Activated CD4-positive, alpha-beta T cell treated with anti-CD3 and anti-CD28 coated beads for 36 hours (primary cell): ENCODE measurements at regions of chr5 and their contacts with region 1.

Region 1: DNA sequence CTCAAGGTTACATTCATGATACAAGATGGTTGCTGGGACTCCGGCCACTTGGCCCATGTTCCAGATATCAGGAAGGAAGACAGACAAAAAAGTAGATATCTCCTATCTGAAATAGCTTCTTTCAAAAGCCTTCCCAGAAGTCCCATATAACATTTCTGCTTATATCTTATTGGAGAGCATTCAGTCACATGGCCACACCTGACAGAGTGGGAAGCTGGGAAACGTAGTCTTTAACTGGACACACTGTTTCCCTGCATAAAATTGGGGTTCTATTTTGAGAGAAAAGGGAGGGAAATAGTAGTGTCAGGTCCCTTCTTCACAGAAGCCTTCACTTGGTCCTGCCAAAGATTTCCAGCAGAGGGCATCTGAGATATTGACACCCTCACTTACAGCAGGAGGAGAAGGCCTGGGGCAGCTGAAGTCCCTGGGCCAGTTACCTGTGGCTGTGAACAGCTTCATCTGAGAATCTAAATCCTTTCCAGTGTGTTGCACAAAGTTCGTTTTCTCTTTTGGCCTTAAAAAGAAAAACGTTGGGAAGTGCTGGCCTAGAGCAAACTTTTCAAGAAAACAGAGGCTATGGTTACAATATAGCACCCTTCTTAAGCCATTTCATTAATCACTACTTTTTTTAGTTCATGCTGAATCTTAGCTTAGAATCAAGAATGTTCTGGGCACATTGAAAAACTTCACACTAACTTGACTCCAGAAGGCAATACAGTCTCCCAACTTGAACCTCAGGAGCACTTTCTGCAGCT is 33.5 kb downstream of the SPEF2 start:
- DNase-seq: peak; percentile 76
- ATAC-seq: peak; percentile 97
- H3K4me3 Mint-ChIP-seq: no peak overlapping the region
- H3K27ac Mint-ChIP-seq: peak overlapping the region; percentile 64
- H3K4me1 Mint-ChIP-seq: peaks cover 25% of the 10 kb centered on the region
- H3K27me3 Mint-ChIP-seq: no peaks in the 10 kb centered on the region

Region 2: DNA sequence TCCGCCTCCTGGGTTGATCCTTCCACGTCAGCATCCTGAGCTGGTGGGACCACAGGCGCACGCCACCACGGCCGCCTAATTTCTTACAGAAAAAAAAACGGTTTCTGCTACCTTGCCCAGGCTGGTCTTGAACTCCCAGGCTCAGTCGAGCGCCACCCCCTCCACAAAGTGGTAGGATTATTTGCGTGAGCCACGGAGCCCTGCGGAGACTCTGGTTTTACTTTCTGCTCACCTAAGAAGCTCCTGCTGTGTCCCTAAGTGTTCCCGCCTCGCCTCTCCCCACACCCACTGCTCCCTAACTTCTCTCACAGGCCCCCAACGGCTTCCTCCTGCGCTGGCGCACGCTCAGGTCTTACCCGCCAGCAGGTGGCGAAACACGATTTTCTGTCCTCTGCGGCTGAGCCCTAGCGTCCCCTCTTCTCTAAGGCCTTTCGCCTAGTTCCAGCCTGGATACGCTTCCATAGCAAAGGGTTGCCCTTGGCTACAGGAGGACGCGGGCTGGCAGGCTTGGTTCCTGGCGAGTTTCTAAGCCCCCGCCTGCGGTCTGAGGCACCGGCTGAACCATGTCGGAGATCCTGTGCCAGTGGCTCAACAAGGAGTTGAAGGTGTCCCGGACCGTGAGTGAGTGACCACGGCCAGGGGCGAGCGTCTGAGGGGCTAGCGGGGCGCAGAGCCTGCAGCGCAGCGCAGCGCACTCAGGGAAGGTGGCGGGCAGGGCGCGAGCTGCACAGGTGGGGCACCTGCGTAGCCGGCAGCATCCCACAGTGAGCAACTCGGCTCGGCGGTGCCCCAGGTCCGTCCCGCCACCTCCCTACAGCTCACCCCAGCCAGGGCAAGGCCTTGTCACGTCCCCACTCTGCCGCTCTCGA is 33.5 kb before region 1 on chr5 and contains the start of gene SPEF2:
- CTCF ChIA-PET with region 1: interaction called, 4 read pairs
- POLR2A ChIA-PET with region 1: no interaction called
- intact Hi-C with region 1: loop called in 1 of 2 experiments (anchors 5 kb)
- DNase-seq: peak; percentile 91
- ATAC-seq: peak; percentile 92
- H3K4me3 Mint-ChIP-seq: peak within 1 kb of the TSS; percentile 83
- H3K27ac Mint-ChIP-seq: peak within 1 kb of the TSS; percentile 99
- H3K4me1 Mint-ChIP-seq: peaks cover 31% of the 10 kb centered on the region
- H3K27me3 Mint-ChIP-seq: no peaks in the 10 kb centered on the region
- total RNA-seq, gene SPEF2: 14.1 to 14.6 TPM

Region 3: GRCh38 chr5:35640623-35641022 is 10.6 kb before region 1 on chr5:
- CTCF ChIA-PET with region 1: interaction called, 14 read pairs
- POLR2A ChIA-PET with region 1: no interaction called
- intact Hi-C with region 1: no loop called
- DNase-seq: no peak
- ATAC-seq: no peak
- H3K4me3 Mint-ChIP-seq: no peak overlapping the region
- H3K27ac Mint-ChIP-seq: no peak overlapping the region
- H3K4me1 Mint-ChIP-seq: peaks cover 2% of the 10 kb centered on the region
- H3K27me3 Mint-ChIP-seq: no peaks in the 10 kb centered on the region

Region 4: GRCh38 chr5:35665096-35665495 is 13.9 kb after region 1 on chr5:
- CTCF ChIA-PET with region 1: interaction called, 25 read pairs
- POLR2A ChIA-PET with region 1: no interaction called
- intact Hi-C with region 1: no loop called
- DNase-seq: no peak
- ATAC-seq: no peak
- H3K4me3 Mint-ChIP-seq: no peak overlapping the region
- H3K27ac Mint-ChIP-seq: peak overlapping the region; percentile 7
- H3K4me1 Mint-ChIP-seq: peaks cover 55% of the 10 kb centered on the region
- H3K27me3 Mint-ChIP-seq: no peaks in the 10 kb centered on the region

Region 5: DNA sequence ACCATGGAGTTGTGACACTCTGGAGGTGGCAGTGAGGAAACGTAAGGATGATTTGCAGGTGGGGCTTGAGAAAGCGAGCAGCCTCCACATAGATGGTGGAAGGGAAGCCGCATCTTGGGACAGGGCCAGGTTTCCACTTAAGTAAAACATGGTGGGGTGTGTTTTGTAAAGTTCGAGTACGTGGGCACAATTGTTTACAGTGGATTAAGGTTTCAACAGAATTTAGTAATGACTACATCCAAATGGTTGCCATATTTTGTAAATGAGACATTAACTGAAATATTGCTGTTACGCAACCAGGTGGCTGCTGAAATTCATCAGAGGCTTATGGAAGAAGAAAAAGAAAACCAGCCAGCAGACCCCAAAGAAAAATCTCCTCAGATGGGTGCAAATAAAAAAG is 120.1 kb after region 1 on chr5:
- CTCF ChIA-PET with region 1: interaction called, 5 read pairs
- POLR2A ChIA-PET with region 1: no interaction called
- intact Hi-C with region 1: loop called in 1 of 2 experiments (anchors 5 kb)
- DNase-seq: no peak
- ATAC-seq: no peak
- H3K4me3 Mint-ChIP-seq: no peak overlapping the region
- H3K27ac Mint-ChIP-seq: no peak overlapping the region
- H3K4me1 Mint-ChIP-seq: peaks cover 53% of the 10 kb centered on the region
- H3K27me3 Mint-ChIP-seq: no peaks in the 10 kb centered on the region

Region 6: DNA sequence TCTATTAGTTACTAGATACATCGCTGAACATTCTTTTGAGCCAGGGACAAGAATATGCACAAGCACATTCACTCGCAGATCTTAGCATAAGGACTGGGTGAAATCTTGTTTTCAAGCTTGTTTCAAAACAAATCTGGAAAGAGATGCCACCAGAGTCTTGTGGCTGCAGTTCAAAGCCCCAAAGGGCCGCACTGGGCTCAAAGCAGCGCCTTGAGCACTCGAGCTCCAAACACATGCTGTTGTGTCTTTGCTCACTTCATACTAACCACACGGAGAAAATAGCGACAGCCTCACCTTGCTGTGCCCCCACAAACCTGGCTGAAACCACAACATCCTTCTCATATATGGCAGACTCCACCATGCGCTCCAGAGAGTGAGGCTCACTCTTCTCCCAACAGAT is 171.3 kb after region 1 on chr5:
- CTCF ChIA-PET with region 1: interaction called, 10 read pairs
- POLR2A ChIA-PET with region 1: no interaction called
- intact Hi-C with region 1: no loop called
- DNase-seq: peak; percentile 63
- ATAC-seq: no peak
- H3K4me3 Mint-ChIP-seq: peak overlapping the region; percentile 58
- H3K27ac Mint-ChIP-seq: peak overlapping the region; percentile 98
- H3K4me1 Mint-ChIP-seq: peaks cover 89% of the 10 kb centered on the region
- H3K27me3 Mint-ChIP-seq: no peaks in the 10 kb centered on the region

Region 7: DNA sequence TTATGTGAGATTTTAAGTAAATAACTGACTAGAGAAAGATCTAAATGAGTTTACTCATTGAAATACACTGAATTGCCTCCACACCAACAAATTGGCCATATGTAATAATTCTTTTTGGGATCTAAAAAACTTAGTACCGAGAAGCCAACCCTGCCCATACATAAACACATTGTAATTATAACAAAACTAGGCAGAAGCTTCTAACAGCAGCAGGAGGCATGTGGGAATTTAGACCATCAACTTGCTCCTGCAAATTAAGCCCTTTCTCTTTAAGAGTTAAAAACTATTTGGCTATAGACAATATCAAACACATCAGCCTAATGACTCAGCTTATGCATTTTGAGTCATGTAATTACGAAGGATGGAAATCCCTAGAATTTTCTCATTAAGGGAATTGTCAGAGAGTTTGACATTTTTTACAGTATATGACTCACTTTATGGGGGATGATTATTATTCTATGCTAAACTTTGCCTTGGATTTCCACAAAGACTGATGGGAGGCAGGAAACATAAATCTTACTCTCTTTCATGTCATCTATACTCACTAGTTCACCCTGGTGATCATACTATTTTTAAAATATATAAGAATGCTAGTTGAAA is 206.5 kb after region 1 on chr5:
- CTCF ChIA-PET with region 1: interaction called, 9 read pairs
- POLR2A ChIA-PET with region 1: no interaction called
- intact Hi-C with region 1: loop called (anchors 1 to 5 kb)
- DNase-seq: no peak
- ATAC-seq: no peak
- H3K4me3 Mint-ChIP-seq: peak overlapping the region; percentile 89
- H3K27ac Mint-ChIP-seq: peak overlapping the region; percentile 99
- H3K4me1 Mint-ChIP-seq: peaks cover 71% of the 10 kb centered on the region
- H3K27me3 Mint-ChIP-seq: no peaks in the 10 kb centered on the region